Posterior cingulate gyrus (tissue), 11 donors: ENCODE measurements at regions of chr2 and their contacts with region 1.

Region 1: DNA sequence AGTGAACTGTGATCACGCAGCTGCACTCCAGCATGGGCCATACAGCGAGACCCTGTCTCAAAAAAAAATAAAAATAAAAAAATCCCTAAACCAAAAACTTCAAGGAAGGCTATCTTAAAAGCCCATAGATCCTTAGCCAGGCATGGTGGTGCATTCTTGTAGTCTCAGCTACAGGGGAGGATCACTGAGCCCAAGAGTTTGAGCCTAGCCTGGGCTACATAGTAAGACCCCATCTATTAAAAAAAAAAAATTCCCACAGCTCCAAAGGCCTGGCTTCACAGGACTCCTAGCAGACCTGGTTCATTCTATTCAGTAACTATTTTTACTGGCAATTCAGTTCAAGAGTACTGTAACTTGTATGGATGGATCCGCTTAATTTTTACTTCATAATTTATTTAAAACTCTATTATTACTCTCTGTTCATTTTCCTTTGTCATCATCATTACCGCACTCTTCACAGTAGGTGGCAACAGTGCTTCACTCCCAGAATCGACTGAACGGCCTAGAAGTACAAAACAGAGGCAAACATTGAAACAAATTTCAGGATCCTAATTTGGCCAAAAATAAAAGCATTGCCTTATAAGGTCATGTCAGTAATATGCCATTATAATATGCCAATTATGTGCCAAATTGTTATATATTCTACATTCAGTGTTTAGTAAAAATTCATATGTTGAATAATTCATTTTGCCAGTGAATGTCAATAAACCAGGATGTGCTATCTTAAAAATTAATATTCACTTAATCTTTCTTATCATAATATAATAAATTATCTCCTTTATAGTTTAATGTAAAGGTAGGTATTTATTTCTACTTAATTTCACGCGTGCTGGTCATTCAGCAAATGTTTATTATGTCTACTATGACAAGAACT is 14.3 kb upstream of the STAM2 start:
- DNase-seq: peak in 4 of 10 donors; percentile 13 to 42 (median 37)

Region 2: GRCh38 chr2:152307863-152308262 is 118.0 kb after region 1 on chr2:
- intact Hi-C with region 1: no loop called
- DNase-seq: no peak

Region 3: DNA sequence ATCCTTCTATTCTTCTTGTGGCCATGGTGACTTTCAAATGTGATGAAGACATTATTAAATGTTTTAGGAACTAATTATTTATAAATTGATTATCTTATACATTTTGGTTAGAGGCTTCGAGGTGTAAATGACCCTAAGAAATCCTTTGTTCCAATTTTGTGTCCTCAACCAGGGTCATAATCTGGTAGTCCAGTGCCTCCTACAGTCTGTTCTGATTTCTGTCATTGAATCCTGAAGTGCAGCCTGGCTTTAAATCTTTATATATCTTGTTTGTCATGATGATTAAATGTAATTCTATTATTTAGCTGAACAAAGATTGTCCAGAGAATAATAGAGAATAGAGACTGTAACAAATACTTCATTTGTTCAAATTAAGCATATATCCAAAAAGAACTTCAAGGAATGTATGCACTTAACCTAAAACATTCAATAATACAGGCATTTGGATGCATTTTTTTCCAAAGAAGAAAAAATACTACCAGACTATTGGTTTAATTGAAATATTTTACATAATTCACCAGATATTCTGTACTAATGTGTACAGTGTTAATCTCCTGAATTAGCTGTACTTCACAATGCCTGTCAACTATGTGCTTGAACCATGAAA is 437.6 kb after region 1 on chr2:
- intact Hi-C with region 1: loop called (anchors 2 kb)
- DNase-seq: no peak

Region 4: GRCh38 chr2:152635635-152636298 is 445.9 kb after region 1 on chr2:
- intact Hi-C with region 1: loop called (anchors 2 kb)
- DNase-seq: peak in 7 of 10 donors; percentile 31 to 83 (median 70)